ENCODE measurements at regions of chr3 and their contacts with region 1.

Region 1: GRCh38 chr3:187066228-187066995 is 72.9 kb downstream of the RPL39L start:
- DNase-seq: no peak
- ATAC-seq: peak; percentile 39
- H3K4me3 Mint-ChIP-seq: peak overlapping the region; percentile 68
- H3K27ac Mint-ChIP-seq: peak overlapping the region; percentile 92
- H3K4me1 Mint-ChIP-seq: peaks cover 97% of the 10 kb centered on the region
- H3K27me3 Mint-ChIP-seq: no peaks in the 10 kb centered on the region
- CTCF ChIP-seq: no peak

Region 2: DNA sequence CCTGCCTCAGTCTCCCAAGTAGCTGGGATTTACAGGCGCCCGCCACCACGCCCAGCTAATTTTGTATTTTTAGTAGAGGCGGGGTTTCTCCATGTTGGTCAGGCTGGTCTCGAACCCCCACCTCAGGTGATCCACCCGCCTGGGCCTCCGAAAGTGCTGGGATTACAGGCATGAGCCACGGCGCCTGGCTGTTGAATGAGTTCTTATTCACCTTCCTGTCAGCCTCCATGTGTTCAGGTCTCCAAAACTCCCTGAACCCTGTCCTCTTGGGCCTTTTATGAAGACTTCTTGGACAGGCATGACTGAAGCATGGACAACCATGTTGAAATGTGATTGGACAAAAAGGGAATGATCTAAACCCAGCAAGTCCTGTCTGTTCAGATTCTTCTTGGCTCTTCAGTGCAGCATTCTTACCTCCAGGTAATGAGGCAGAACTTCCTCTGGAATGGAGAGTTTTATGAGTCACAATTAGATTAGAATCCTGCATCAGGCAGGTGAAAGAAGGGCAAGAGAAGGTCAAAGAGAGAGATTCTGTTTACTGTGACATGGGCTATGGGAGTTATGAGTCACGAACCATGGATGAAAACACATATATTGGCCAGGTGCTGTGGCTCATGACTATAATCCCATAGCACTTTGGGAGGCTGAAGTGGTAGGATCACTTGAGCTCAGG is 306.1 kb before region 1 on chr3:
- CTCF ChIA-PET with region 1: no interaction called
- POLR2A ChIA-PET with region 1: no interaction called
- intact Hi-C with region 1: no loop called
- DNase-seq: no peak
- ATAC-seq: no peak
- H3K4me3 Mint-ChIP-seq: no peak overlapping the region
- H3K27ac Mint-ChIP-seq: no peak overlapping the region
- H3K4me1 Mint-ChIP-seq: no peaks in the 10 kb centered on the region
- H3K27me3 Mint-ChIP-seq: no peaks in the 10 kb centered on the region
- CTCF ChIP-seq: no peak

Region 3: DNA sequence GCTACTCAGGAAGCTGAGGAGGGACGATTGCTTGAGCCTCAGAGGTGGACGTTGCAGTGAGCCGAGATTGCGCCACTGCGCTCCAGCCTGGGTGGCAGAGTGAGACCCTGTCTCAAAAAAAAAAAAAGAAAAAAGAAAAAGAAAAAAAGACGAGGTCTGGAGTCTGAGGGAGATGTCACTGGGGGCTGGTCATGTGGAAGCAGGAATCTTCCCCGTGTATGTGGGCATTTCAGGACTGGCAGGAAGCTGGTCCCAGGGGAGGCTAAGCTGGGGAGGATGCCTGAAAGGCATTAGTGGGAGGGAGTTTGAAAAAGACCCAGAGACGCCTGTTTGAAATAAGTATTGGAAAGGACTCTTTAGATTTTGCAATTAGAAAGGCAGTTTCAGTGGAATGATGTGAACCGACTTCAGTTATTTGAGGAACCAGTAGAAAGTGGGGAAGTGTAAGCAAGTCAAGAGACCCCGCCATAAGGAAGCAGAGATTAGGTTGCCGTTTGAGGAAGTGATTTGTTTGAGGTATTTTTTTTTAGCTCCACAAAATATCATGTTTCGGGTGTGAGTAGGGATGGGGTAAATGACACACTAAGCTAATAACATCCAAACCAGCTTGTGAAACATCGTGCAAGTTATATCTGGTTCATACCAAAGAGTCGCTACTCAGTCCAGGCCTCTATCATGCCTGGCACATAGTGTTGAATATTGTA is 80.6 kb before region 1 on chr3:
- CTCF ChIA-PET with region 1: interaction called, 3 read pairs
- POLR2A ChIA-PET with region 1: interaction called, 8 read pairs
- intact Hi-C with region 1: loop called (anchors 1 kb)
- DNase-seq: no peak
- ATAC-seq: peak; percentile 82
- H3K4me3 Mint-ChIP-seq: peak overlapping the region; percentile 39
- H3K27ac Mint-ChIP-seq: peak overlapping the region; percentile 97
- H3K4me1 Mint-ChIP-seq: peaks cover 91% of the 10 kb centered on the region
- H3K27me3 Mint-ChIP-seq: no peaks in the 10 kb centered on the region
- CTCF ChIP-seq: no peak

Region 4: DNA sequence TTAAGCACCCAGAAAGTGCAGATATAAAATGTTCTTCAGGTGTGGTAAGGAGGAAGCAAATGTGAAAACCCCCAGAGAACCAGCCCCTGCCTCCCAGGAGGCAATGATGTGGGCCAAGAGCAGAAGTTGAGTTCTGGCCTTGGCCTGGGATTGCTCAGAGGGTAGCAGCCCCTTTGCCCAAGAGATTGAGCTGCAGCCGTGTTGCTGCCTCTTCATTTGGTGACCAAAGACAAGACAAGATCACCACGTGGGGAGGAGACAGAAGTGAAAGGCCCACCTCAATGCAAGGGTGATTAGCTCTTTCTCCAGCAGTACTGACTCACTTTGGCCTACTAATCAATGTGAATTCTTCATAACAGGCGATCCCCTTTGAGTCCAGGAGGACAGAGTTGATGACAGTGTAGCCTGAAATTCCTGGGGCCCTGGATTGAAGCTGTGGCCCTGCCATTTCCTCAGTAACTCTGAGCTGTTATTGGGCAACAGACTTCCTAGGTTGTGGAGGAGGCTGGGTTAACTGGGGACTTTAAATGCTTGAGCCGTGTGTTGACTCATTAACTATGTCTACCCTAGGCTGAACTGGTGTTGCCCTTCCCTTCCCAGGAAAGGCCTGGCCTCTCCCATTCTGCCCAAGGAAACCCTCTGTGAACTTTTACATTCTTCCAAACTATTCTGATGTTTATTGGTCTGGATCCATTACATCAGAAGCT is 49.6 kb before region 1 on chr3:
- CTCF ChIA-PET with region 1: interaction called, 10 read pairs
- POLR2A ChIA-PET with region 1: interaction called, 45 read pairs
- intact Hi-C with region 1: loop called (anchors 1 kb)
- DNase-seq: peak; percentile 52
- ATAC-seq: peak; percentile 66
- H3K4me3 Mint-ChIP-seq: peak overlapping the region; percentile 73
- H3K27ac Mint-ChIP-seq: peak overlapping the region; percentile 87
- H3K4me1 Mint-ChIP-seq: peaks cover 100% of the 10 kb centered on the region
- H3K27me3 Mint-ChIP-seq: no peaks in the 10 kb centered on the region
- CTCF ChIP-seq: no peak

Region 5: DNA sequence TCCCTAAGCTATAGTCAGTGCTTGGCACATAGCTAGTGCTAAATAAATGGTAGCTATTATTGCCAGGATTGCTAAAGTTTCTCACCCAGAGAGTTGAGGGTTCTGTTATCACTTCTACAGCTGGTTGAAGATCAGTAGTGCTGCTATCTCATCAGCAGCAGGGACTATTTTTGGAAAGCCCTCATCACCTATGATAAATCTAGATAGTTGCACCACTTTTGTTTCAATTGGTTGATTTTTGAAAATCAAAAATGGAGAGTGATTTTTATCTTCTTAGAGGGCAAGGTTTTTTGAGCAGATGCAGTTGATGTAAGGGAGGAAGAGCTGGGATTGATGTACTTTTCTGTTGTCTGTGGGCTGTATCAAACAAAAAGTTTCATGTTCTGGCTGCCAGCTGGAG is 34.5 kb before region 1 on chr3:
- CTCF ChIA-PET with region 1: interaction called, 4 read pairs
- POLR2A ChIA-PET with region 1: interaction called, 29 read pairs
- intact Hi-C with region 1: no loop called
- DNase-seq: no peak
- ATAC-seq: no peak
- H3K4me3 Mint-ChIP-seq: peak overlapping the region; percentile 69
- H3K27ac Mint-ChIP-seq: peak overlapping the region; percentile 86
- H3K4me1 Mint-ChIP-seq: peaks cover 90% of the 10 kb centered on the region
- H3K27me3 Mint-ChIP-seq: no peaks in the 10 kb centered on the region
- CTCF ChIP-seq: no peak

Region 6: DNA sequence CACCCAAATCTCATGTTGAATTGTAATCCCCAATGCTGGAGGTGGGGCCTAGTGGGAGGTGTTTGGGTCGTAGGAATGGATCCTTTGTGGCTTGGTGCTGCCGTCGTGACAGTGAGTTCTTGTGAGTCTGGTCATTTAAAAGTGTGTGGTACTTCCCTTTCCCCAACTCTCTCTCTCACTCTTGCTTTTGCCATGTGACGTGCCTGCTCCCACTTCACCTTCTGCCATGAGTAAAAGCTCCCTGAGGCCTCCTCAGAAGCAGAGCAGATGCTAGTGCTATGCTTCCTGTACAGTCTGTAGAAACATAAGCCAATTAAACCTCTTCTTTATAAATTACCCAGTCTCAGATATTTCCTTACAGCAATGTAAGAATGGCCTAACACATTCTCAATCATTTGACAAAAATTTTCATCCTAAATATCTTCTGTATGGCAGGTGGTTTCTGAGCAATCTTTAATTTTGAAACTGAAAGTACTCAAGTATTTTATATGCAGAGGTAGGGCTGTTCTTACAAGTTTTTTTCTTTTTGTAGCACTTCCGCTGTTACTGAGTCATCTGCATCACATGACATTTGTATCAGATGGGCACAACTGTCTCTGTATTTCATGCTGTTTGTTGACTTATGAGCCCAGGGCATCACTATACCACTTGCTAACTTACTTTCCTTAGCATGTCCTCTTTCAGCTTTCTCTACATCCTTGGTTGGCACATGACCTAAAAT is 64.1 kb after region 1 on chr3:
- CTCF ChIA-PET with region 1: no interaction called
- POLR2A ChIA-PET with region 1: no interaction called
- intact Hi-C with region 1: loop called (anchors 5 kb)
- DNase-seq: no peak
- ATAC-seq: peak; percentile 90
- H3K4me3 Mint-ChIP-seq: peak overlapping the region; percentile 76
- H3K27ac Mint-ChIP-seq: peak overlapping the region; percentile 96
- H3K4me1 Mint-ChIP-seq: peaks cover 46% of the 10 kb centered on the region
- H3K27me3 Mint-ChIP-seq: no peaks in the 10 kb centered on the region
- CTCF ChIP-seq: no peak

Measured in activated B cell treated with CpG ODN at 0.5 μM for 24 hours (primary cell).